Prostate gland (tissue), 2 donors: ENCODE measurements at regions of chr2 and their contacts with region 1.

Region 1: DNA sequence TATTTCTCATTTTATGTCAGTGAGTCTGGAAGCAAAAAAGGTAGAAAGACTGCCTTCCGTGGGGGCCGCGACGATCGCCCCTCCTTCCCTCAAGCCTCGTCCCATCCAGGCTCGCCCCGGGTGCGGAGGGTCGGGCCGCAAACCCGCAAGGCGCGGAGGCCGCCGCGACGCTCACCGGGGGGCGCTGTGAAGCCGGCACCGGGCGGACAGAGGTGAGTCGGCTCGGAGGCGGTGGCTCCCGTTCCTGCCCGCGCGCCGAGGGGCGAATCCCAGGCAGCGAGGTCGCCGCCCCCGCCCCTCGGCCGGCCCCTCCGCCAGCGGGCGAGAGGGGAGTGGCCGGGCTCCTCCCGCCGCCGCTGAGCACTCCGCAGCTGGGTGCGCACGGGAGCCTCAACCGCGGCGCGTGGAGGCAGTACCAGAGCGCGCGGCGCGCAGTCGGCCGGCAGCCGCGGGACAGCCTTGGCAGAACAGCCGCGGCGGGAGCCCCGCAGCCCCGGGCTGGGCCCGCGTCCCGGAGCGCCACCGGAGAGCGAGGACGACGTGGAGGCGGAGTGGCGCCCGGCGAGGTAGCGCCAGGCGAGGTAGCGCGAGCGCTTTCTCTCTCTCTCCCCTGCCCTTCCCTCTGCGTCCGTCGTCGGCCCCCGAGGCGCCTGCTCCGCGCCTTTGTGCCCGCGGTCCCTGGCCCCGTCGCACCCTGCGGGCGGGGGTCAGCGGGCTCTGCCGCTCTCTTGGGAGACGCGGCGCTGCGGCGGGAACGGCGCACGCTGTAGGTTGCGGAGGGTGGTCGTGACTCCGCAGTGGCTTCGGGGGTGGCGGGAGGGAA is at the start of gene MYO1B:
- DNase-seq: peak; percentile 77
- H3K4me3 ChIP-seq: peak within 1 kb of the TSS; percentile 64 to 76
- H3K27ac ChIP-seq: peak within 1 kb of the TSS; percentile 65 to 68
- H3K4me1 ChIP-seq: no peaks in the 10 kb centered on the region
- H3K27me3 ChIP-seq: no peaks in the 10 kb centered on the region
- CTCF ChIP-seq: peak; percentile 18 to 77 (median 64)
- POLR2A ChIP-seq: peak; percentile 81
- total RNA-seq, gene MYO1B: 22.4 to 38.3 TPM

Region 2: DNA sequence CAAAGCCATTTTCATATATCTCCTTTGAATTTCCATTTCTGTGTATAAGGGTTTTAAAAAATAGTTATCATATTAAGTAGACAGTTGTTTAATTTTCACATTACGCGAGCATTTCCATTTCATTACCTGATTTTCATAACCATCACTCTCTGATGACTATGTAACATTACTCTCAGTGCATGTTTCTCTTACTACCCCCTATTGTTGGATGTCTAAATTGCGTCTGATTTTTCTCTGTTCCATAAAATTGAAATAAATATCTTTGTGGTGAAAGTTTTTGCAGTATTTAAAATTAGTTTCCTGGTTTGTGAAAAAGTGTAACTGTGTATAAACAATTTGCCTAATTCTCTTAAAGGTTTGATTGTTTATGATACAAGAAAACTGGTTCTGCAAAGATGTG is 123.8 kb after region 1 on chr2:
- intact Hi-C with region 1: loop called (anchors 5 kb)
- DNase-seq: no peak
- H3K4me3 ChIP-seq: no peak overlapping the region
- H3K27ac ChIP-seq: no peak overlapping the region
- H3K4me1 ChIP-seq: no peaks in the 10 kb centered on the region
- H3K27me3 ChIP-seq: no peaks in the 10 kb centered on the region
- CTCF ChIP-seq: peak in 1 of 4 experiments; percentile 33
- POLR2A ChIP-seq: no peak

Region 3: DNA sequence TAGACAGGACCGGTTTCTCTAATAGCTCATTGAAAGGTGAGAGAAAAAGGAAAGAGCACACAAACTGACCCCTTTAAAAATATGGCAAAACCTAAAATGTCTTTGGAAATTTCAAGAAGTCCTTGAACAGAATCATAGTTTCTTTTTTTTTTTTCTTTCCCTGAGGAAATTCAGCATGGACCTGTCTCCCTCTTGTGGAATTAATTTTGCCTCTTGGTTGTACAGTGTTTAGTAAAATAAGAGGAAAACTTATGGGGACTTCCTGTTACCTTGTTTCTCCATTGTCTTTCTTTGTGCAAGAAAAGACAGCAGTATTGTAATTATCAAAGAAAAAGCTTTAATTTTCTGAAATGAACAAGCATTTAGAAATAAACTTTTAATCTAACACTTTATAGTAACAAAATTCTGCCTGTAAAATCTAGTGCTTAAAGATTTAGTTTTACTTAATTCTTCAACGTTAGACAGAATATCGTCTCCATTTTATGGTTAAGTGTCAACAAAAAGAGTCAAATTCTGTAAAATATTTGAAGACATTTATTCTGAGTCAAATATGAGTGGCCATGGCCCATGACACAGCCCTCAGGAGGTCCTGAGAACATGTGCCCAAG is 256.4 kb after region 1 on chr2:
- intact Hi-C with region 1: loop called (anchors 2 kb)
- DNase-seq: no peak
- H3K4me3 ChIP-seq: no peak overlapping the region
- H3K27ac ChIP-seq: no peak overlapping the region
- H3K4me1 ChIP-seq: no peaks in the 10 kb centered on the region
- H3K27me3 ChIP-seq: no peaks in the 10 kb centered on the region
- CTCF ChIP-seq: peak; percentile 46 to 82 (median 71)
- POLR2A ChIP-seq: no peak